Pancreas (tissue), 10 donors: ENCODE measurements at regions of chr1 and their contacts with region 1.

Region 1: DNA sequence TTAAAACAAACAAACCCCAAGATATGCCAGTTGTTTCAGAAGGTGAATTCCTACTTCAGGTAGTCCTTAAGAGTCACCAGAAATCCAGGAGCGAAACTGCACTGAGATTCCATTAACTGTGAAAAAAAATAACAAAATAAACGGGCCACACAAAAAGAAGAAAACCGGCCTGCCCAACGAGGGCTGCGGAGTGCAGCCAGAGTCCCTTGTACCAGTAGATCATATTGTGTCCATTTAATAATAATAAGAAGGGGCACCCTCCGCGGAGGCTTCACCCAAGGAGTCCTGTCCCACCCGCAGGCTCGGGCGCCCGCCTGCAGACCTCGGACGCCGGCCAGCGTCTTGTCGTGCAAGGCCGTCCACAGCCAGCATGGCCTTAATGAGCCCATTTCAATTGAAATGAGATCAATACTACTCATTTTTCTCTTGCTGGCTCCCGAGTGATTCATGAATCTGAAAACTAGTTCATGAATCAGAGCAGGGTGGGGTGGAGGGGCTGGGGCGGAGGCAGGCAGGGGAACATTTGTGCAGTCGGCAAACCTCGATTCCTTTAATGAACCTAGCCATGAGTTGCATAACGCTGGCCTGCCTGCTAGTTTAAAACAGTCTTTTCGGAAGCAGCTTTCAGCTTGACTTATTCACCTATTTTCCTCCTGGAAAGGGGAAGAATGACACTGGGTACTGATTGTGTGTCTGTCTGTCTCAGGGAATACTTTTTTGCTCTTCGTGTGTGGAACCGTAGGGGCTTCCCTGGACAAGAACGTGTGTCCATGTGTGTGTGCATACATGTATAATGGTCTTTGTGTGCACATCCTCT is 113.1 kb upstream of the IRF2BP2 start:
- DNase-seq: peak in 5 of 6 donors; percentile 60 to 79 (median 69)
- ATAC-seq: peak; percentile 2 to 30 (median 14)
- H3K4me3 ChIP-seq: no peak overlapping the region
- H3K27ac ChIP-seq: peak overlapping the region; percentile 94 to 99 (median 97)
- H3K4me1 ChIP-seq: peaks cover 64 to 83% (median 68%) of the 10 kb centered on the region in 3 donors
- H3K27me3 ChIP-seq: no peaks in the 10 kb centered on the region
- CTCF ChIP-seq: no peak

Region 2: GRCh38 chr1:234610348-234611152 is 112.6 kb before region 1 on chr1:
- intact Hi-C with region 1: loop called in 2 of 3 experiments (anchors 5 kb)
- DNase-seq: peak; percentile 95 to 98 (median 96)
- ATAC-seq: peak; percentile 59 to 75 (median 62)
- H3K4me3 ChIP-seq: peak overlapping the region; percentile 13 to 96 (median 44)
- H3K27ac ChIP-seq: peak overlapping the region; percentile 99 to 100 (median 100)
- H3K4me1 ChIP-seq: peaks cover 29 to 36% (median 35%) of the 10 kb centered on the region in 3 donors
- H3K27me3 ChIP-seq: no peaks in the 10 kb centered on the region
- CTCF ChIP-seq: no peak

Region 3: GRCh38 chr1:234617131-234617985 is 105.8 kb before region 1 on chr1:
- intact Hi-C with region 1: loop called in 1 of 3 experiments (anchors 5 kb)
- DNase-seq: no peak
- ATAC-seq: no peak
- H3K4me3 ChIP-seq: no peak overlapping the region
- H3K27ac ChIP-seq: peak overlapping the region in 3 of 4 donors; percentile 25 to 86 (median 33)
- H3K4me1 ChIP-seq: peaks cover 65 to 86% (median 85%) of the 10 kb centered on the region in 3 donors
- H3K27me3 ChIP-seq: no peaks in the 10 kb centered on the region
- CTCF ChIP-seq: no peak

Region 4: DNA sequence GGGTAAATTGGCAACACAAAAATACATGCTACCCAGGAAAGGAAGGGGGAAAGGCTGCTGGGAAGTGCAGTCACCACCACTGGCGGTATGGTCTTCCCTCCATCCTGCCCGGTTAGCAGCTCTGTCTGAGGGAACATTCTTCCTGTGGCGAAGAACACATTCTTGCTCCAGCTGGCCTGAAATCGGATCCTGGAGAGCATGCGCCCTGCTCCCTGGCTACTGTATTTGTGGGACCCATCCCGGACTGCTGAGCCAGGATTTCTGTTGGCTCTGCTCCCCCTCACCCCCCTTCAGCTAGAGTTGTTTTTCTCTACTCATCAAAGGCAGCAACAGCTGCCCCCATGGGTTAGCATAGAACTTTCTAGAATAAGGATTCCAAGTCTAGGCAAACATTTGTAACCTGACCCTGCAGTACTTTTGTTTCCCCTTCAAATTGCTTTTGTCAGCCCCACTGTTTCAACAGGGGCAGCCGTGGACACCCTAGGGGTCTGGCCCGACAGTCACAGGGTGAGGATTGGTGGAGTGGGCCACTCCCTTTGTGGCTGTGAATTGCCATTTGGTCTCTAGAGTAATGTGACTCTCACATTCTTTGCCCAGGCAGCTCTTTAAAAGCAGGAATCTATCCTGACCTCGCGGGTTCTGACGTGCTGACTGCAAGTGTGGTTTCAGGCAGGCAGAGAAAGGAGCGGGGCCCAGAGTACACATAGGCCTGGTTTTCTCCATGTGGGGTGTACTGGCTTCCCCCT is 247.8 kb after region 1 on chr1:
- intact Hi-C with region 1: loop called in 1 of 3 experiments (anchors 5 kb)
- DNase-seq: peak in 3 of 6 donors; percentile 53 to 57 (median 55)
- ATAC-seq: peak; percentile 44 to 54 (median 50)
- H3K4me3 ChIP-seq: no peak overlapping the region
- H3K27ac ChIP-seq: peak overlapping the region; percentile 71 to 90 (median 86)
- H3K4me1 ChIP-seq: peaks cover 14 to 41% (median 32%) of the 10 kb centered on the region in 3 donors
- H3K27me3 ChIP-seq: no peaks in the 10 kb centered on the region
- CTCF ChIP-seq: no peak

Region 5: DNA sequence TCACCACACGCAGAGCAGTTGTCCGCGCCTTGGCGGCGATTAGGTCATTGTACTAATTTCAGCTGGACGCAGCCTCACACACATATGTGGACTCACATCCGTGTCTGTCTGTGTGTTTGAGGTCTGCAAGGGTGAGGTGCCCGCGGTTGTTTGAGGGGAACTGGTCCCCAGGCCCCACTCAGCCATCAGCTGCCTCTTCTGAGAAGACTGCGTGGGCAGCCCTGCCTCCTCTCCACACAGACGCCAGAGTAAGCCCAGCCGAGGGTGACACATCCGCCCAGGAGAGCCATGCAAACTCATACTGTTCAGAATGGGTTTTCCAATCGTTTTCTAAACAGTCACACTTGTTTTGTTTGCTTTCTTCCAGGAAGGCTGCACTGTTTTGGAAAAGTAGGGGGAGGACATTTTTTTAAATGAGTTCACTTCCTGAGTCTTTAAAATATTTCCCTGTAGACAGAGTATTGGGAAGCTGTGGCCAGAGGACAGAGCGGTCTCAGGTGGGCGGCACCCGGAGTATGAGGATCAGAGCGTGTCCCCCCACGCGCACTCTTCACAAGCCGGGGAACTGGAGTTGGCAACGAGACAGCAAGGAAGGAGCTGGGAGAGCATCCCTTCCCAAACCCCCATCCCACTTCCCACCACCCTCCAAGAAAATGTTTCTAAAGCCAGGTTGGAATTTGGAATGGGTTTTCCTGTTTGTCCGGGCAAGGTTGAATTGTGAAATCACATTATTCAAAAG is 352.2 kb after region 1 on chr1:
- intact Hi-C with region 1: loop called in 1 of 3 experiments (anchors 5 kb)
- DNase-seq: peak in 5 of 6 donors; percentile 57 to 73 (median 62)
- ATAC-seq: peak in 3 of 4 donors; percentile 7 to 51 (median 11)
- H3K4me3 ChIP-seq: no peak overlapping the region
- H3K27ac ChIP-seq: peak overlapping the region; percentile 90 to 98 (median 96)
- H3K4me1 ChIP-seq: peaks cover 37 to 72% (median 64%) of the 10 kb centered on the region in 3 donors
- H3K27me3 ChIP-seq: no peaks in the 10 kb centered on the region
- CTCF ChIP-seq: no peak